ENCODE measurements at regions of chr7 and their contacts with region 1.

Region 1: GRCh38 chr7:52695973-52696595 is 339.3 kb upstream of the POM121L12 start:
- DNase-seq: no peak
- ATAC-seq: no peak
- H3K4me3 ChIP-seq: no peak overlapping the region
- H3K27ac ChIP-seq: no peak overlapping the region
- H3K4me1 ChIP-seq: no peaks in the 10 kb centered on the region
- H3K27me3 ChIP-seq: no peaks in the 10 kb centered on the region
- CTCF ChIP-seq: no peak
- POLR2A ChIP-seq: no peak

Region 2: DNA sequence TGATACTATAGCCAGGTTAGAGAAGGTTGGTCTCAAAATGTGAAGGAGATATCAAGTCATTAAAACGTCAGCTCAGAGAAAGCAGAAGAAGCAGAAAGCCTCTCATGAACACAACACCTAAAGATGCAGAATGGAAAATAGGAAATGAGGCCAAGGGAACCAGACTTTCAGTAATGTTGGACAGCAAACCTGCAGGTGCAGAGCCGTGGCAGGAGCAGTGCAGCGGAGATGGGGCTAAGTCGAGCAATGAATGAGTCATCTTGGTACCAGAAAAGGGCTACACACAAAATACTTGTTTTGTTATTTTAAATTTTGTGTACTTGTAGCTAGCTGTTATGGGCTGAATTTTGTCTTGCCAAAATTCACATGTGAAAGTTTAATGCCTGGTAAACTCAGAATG is 140.3 kb before region 1 on chr7:
- intact Hi-C with region 1: loop called in 1 of 10 experiments (anchors 5 kb)
- DNase-seq: no peak
- ATAC-seq: no peak
- H3K4me3 ChIP-seq: no peak overlapping the region
- H3K27ac ChIP-seq: no peak overlapping the region
- H3K4me1 ChIP-seq: no peaks in the 10 kb centered on the region
- H3K27me3 ChIP-seq: no peaks in the 10 kb centered on the region
- CTCF ChIP-seq: no peak
- POLR2A ChIP-seq: no peak

Region 3: GRCh38 chr7:52799817-52800216 is 103.7 kb after region 1 on chr7:
- intact Hi-C with region 1: no loop called
- DNase-seq: peak in 1 of 5 donors; percentile 18
- ATAC-seq: no peak
- H3K4me3 ChIP-seq: no peak overlapping the region
- H3K27ac ChIP-seq: no peak overlapping the region
- H3K4me1 ChIP-seq: no peaks in the 10 kb centered on the region
- H3K27me3 ChIP-seq: no peaks in the 10 kb centered on the region
- CTCF ChIP-seq: no peak
- POLR2A ChIP-seq: no peak

Region 4: DNA sequence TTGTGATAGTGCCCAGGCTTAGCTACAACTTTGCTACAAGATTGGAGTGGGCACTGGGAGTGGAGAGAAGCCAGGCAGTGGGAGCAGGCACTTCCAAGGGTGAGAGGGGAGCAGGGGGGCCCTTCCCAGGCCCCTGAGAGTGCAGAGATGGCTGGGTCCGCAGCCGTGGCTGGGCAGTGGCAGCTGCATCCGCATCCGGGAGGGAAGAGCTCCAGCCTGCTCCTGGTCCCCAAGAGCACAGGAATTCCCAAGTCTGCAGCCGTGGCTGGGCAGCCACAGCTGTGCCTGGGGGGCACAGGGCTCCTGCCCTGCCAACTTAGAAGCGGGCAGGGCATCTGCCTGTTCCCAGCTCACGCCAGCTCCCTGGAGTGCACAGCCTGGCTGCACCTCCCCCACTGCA is 215.2 kb after region 1 on chr7:
- intact Hi-C with region 1: no loop called
- DNase-seq: peak in 1 of 5 donors; percentile 51
- ATAC-seq: no peak
- H3K4me3 ChIP-seq: no peak overlapping the region
- H3K27ac ChIP-seq: no peak overlapping the region
- H3K4me1 ChIP-seq: no peaks in the 10 kb centered on the region
- H3K27me3 ChIP-seq: no peaks in the 10 kb centered on the region
- CTCF ChIP-seq: no peak
- POLR2A ChIP-seq: no peak